Activated T-helper 1 cell treated with anti-CD3 and anti-CD28 coated beads, Interleukin-12 subunit alpha, Interleukin-12 subunit beta, Interleukin-2, Interleukin-4 antibody, amounts not matched to agents 30 ng/mL and 10 ng/mL and 1 ng/mL, durations not matched to agents 14 hours and 24 hours and 36 hours (primary cell): ENCODE measurements at regions of chr2 and their contacts with region 1.

Region 1: DNA sequence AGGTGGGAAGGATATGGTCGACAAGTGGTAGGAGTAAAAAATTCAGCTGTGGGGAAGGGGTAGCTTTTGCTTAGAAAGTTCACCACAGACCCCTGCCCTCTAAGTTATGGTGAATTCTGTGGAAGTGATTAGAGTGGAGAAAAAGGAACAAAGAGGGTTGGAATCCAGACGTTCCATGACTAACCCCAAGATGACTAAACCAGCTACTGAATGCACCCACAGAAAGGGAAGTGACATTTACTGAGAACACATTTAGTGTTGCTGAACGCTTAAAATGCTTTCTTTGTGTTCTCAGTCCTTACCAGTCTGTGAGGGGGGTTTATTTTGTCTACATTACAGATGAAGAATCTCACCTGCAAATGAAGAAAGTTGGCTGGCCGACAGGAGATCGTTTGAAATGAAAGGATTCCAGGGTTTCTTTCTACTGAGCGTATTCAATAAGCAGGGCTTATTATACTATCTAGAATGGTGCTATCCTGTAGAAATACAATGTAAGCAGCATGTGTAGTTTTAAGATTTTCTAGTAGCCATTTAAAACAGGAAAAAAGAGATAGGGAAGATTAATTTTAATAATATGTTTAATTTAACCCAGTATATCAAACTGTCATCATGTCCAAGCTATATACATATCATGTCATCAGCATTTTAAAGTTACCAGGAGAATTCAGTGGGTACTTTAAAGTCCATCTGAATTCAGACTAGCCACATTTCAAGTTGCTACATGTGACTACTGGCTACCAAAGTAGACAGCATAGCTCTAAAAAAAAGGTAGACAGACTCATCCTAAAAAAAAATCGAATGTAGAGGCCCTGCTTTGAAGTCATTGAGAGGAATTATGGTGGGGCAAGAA is 60.1 kb downstream of the LIMS1 start:
- DNase-seq: no peak
- H3K4me3 Mint-ChIP-seq: peak overlapping the region; percentile 72
- H3K27ac Mint-ChIP-seq: peak overlapping the region; percentile 92
- H3K4me1 Mint-ChIP-seq: peaks cover 63% of the 10 kb centered on the region
- H3K27me3 Mint-ChIP-seq: no peaks in the 10 kb centered on the region

Region 2: DNA sequence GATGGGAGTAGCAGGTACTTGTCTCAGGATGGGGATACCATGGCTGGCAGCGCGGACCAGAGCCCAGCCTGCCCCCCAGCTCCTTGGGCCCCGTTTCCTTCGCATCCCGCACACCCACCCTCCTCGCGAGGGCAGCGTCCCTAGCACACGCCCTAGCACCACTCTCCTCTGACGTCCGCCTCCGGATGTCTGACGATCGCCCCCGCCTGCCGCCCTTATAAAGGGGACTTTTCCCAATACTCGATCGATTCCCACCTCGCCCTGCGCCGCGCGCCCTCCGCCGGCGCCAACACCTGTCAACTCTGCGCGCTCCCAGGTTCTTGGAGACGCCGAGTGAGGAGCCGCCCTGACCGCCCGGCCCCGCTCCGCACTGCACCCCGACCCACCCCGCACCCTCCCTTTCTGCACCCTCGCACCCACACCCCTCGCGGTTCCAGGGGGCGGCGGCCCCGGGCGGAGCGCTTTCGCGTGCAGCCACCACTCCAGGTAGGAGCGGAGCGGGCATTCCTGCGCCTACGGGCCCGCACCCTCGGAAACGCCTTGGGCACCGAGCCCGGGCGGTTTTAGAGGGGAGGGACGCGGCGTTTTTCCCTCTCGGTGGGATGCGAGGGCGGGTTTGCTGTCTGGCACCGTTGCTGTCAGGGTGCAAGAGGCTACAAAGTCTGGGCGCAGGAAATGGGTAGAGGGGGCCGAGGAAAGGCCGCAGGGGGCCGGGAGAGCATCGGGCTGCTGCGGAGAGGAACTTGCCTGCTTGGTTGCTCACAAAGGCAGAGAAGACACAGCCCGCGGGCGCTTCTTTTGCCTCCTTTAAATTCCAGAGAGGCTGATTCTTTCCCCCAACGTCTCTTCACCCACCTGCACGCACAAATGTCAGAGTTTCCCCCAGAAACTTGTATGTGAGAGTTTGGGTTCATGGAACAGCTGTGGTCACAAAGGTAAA is 607.8 kb before region 1 on chr2 and contains the start of gene SLC5A7:
- intact Hi-C with region 1: no loop called
- DNase-seq: no peak
- H3K4me3 Mint-ChIP-seq: no peak within 1 kb of the TSS
- H3K27ac Mint-ChIP-seq: no peak within 1 kb of the TSS
- H3K4me1 Mint-ChIP-seq: no peaks in the 10 kb centered on the region
- H3K27me3 Mint-ChIP-seq: peaks cover 16% of the 10 kb centered on the region
- total RNA-seq, gene SLC5A7: not detected in 2 replicates

Region 3: DNA sequence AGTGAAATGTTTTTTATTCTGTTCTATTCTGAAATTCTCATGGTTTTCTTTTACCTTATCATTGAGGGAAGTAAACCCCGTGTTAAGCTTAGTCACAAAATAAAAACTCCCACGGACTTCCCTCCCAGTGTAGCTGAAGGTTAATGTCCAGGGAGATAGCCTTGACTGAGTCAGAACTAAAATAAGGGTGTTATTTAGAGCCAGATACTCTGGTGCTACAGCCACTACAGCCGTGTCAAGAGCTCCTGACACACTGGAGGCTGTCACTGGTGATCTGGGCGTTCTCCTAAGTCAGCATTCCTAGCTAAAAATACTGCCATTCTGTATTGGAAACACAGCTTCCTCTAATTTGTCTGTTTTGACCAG is 42.9 kb after region 1 on chr2:
- intact Hi-C with region 1: loop called (anchors 1 kb)
- DNase-seq: no peak
- H3K4me3 Mint-ChIP-seq: no peak overlapping the region
- H3K27ac Mint-ChIP-seq: peak overlapping the region; percentile 67
- H3K4me1 Mint-ChIP-seq: peaks cover 77% of the 10 kb centered on the region
- H3K27me3 Mint-ChIP-seq: no peaks in the 10 kb centered on the region

Region 4: DNA sequence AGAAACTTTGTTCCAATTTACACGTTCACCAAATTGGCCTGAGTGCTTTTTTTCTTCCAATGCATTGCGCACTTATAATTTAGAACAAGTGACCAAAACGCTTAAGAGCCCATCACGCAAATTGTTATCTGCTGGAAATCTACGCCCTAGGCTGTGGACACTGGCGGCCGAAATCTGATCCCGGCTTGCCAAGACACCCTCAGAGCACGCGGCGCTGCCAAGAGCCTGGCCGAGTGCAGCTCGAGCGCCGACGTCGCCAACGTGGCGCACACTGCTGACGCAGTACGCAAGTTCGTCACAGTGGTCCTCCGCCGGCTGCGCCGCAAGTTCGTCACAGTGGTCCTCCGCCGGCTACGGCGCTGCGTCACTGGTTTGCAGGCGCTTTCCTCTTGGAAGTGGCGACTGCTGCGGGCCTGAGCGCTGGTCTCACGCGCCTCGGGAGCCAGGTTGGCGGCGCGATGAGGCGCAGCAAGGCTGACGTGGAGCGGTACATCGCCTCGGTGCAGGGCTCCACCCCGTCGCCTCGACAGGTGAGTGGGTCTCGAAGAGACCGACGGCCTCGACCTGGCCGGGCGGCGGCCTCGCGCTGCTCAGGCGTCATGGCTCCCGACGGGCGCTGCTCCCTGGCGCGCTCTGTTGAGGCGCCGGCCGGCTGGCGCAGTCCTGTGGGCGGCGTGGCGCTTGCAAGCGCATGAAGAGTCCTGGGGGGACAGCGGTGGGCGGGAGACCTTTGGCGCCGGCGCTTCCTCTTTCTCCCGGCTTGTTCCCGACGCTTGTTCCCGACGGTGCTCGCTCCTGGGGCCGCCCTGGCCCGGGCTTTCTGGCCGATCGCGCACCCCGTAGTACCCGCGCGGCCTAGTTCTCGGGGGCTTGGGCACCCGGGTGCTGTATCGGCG is 125.0 kb after region 1 on chr2 and contains the start of gene RANBP2:
- intact Hi-C with region 1: loop called (anchors 1 kb)
- DNase-seq: peak; percentile 92
- H3K4me3 Mint-ChIP-seq: peak within 1 kb of the TSS; percentile 94
- H3K27ac Mint-ChIP-seq: peak within 1 kb of the TSS; percentile 99
- H3K4me1 Mint-ChIP-seq: peaks cover 16% of the 10 kb centered on the region
- H3K27me3 Mint-ChIP-seq: no peaks in the 10 kb centered on the region
- total RNA-seq, gene RANBP2: 68.0 and 74.1 TPM in 2 replicates

Region 5: DNA sequence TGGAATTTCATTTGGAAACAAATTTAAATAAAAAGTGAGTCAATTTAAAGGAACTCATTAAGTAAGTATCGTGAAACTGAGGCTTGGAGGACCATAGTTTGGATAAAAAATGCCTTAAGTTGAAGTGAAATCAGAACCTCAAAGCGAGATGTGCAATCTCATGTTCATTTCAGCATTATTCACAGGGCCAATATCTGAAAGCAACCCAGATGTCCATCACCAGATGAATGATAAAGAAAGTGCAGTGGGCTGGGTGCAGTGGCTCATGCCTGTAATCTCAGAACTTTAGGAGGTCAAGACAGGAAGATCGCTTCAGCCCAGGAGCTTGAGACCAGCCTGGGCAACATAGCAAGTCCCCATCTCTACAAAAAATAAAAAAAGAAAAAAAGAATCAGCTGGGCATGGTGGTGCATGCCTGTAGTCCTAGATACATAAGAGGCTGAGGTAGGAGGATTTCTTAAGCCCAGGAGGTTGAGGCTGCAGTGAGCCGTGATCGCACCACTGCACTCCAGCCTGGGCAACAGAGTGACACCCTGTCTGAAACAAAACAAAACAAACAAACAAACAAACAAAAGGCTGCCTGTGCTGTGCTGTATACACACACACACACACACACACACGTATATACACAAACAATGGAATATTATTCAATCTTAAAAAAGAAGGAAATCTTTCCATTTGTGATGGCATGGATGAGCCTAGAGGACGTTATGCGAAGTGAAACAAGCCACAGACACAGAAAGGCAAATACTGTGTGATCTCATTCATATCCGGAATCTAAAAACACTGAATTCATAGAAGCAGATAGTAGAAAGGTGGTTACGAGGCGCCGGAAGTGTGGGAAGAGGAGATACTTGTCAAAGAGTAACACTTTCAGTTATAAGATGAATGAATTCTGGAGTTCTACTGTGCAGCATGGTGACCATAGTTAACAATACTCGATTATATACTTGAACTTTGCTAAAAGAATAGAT is 549.1 kb after region 1 on chr2:
- intact Hi-C with region 1: loop called (anchors 10 kb)
- DNase-seq: peak; percentile 62
- H3K4me3 Mint-ChIP-seq: peak overlapping the region; percentile 16
- H3K27ac Mint-ChIP-seq: peak overlapping the region; percentile 46
- H3K4me1 Mint-ChIP-seq: peaks cover 35% of the 10 kb centered on the region
- H3K27me3 Mint-ChIP-seq: peaks cover 53% of the 10 kb centered on the region